ENCODE measurements at regions of chr15 and their contacts with region 1.

Region 1: DNA sequence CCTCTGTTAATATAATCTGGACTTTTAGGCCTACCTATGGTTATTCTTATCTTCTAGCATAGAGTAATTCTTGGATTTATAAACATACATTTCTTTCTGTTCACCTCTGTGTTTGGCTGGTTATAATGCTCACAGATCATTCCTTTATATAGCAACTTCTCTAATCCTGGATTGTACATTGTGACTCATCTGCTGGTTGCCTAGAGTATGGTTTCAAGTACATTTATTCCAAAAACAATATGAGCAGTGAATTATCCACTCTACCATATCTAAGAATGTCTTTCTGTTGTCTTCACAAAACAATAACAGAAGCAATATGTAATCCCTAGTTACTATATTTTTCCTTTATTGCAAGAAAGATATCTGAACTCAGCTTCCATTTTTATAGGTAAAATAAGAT is 35.3 kb downstream of the FSIP1 start:
- DNase-seq: no peak

Region 2: GRCh38 chr15:39686000-39686613 is 61.2 kb before region 1 on chr15:
- intact Hi-C with region 1: loop called in 1 of 2 experiments (anchors 10 kb)
- DNase-seq: no peak